Endothelial cell of umbilical vein (primary cell): ENCODE measurements at regions of chr9 and their contacts with region 1.

Region 1: DNA sequence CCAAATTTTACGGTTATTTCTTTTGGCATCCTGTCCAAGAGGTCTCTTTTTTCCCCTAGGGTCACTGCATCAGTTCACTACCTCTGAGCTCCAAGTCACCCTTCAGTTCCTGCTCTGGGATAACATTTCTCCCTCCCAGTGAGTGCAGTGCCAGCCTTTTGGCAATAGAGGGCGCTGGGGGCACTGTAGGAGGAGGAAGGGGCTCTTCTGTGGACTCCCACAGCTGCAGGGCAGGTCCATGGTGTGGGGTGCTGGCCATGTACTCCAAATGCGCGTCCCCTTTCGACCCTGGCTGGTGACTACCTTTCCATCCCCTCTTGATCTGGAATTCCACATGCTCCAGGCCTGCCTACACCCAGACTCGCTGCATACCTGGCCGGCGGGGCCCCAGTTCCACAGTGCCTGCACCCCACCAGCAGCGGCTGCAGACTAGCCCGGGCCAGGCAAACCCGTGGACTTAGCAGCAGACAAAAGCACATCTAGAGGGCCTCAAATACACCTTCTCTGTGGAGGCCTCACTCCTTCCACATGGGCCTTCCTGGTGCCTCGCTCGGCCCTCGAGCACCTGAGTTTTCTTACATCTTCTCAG is 20.4 kb upstream of the NINJ1 start:
- DNase-seq: peak; percentile 38
- H3K4me3 ChIP-seq: no peak overlapping the region
- H3K27ac ChIP-seq: no peak overlapping the region
- H3K4me1 ChIP-seq: no peaks in the 10 kb centered on the region
- H3K27me3 ChIP-seq: no peaks in the 10 kb centered on the region
- CTCF ChIP-seq: peak; percentile 60 to 67
- POLR2A ChIP-seq: no peak

Region 2: DNA sequence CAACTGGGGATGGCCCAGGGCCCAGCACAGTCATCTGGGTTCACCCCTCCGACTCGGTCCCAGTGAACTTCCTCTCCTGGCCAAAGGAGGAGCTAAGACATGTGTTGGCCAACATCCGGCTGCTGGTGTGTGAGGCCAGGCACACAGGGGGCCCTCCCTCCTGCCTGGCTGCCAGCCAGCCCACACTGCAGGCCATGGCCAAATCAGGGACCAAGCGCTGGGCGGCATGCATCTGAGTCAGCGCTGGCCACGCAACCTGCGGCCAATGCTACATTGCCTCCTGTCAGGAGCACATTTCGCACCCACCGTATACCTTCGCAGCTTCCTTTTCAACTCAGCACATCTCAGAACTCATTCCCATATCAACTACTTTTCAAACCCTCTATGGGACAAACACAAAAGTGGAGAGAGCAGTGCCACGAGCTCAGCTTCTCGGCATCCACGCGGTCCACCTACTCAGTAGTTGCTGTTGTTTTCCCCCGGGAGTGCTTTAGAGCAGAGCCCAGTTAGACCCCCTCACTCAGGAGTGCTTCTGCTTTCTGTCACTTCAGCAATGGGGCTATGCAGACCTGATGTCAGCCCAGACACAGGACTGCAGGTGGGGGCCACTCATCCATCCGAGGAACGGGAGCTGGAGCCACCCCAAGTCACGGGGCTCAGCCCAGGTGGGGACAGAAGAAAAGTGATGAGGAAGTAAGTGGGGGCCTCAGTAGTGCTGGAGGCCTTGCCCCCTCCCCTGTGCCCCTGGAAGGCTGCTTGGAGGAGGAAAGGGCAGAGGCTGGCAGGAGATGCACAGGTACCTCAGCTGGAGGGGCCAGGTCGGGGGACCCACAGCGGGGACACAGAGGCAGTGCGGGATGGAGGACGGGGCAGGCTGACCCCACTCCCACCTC is 34.2 kb before region 1 on chr9:
- CTCF ChIA-PET with region 1: interaction called, 12 read pairs
- POLR2A ChIA-PET with region 1: no interaction called
- dilution Hi-C with region 1: no loop called
- intact Hi-C with region 1: no loop called
- DNase-seq: peak; percentile 80
- H3K4me3 ChIP-seq: no peak overlapping the region
- H3K27ac ChIP-seq: no peak overlapping the region
- H3K4me1 ChIP-seq: peaks cover 10% of the 10 kb centered on the region
- H3K27me3 ChIP-seq: no peaks in the 10 kb centered on the region
- CTCF ChIP-seq: peak in 1 of 2 donors; percentile 41
- POLR2A ChIP-seq: peak; percentile 30

Region 3: DNA sequence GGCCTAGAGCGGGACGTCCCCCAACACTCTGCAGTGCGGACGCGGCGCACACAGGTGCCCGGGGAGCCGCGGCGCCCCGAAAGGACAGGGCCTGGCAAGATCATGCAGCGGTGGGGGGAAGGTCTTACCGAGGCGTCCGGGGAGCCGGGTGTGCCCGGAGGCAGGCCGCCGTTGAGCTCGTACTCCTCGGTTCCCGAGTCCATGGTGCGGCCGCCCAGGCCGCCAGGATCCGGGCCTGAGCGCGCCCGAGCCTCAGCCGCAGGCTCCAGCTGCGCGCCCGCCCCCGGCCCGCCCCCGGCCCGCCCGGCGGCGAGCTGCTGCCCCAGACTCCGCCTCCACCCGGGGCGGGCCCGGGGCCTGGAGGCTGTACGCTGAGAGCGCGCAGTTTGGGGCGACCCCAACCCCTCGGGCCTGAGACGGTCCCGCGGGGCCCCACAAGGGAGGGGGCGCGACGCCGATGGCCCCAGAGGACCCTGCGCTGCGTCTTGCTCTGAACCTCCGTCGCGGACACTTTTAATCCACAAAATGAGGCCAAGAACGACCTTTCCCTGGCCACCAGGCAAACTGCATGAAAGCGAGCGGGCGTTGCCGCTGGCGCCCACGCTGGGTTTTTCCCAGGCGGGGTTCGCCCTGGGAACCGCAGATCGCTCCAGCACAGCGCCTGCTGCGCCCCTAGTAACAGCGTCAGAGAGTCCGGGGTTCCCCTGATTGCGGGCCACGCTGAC is 20.2 kb before region 1 on chr9 and contains the start of gene NINJ1:
- CTCF ChIA-PET with region 1: interaction called, 10 read pairs
- POLR2A ChIA-PET with region 1: no interaction called
- dilution Hi-C with region 1: no loop called
- intact Hi-C with region 1: no loop called
- DNase-seq: peak; percentile 83
- H3K4me3 ChIP-seq: peak within 1 kb of the TSS; percentile 54 to 63 (median 58)
- H3K27ac ChIP-seq: peak within 1 kb of the TSS; percentile 75
- H3K4me1 ChIP-seq: peaks cover 49% of the 10 kb centered on the region
- H3K27me3 ChIP-seq: no peaks in the 10 kb centered on the region
- CTCF ChIP-seq: peak in 1 of 2 donors; percentile 5
- POLR2A ChIP-seq: peak; percentile 77
- total RNA-seq, gene NINJ1: 31.5 and 42.2 TPM in 2 replicates

Region 4: DNA sequence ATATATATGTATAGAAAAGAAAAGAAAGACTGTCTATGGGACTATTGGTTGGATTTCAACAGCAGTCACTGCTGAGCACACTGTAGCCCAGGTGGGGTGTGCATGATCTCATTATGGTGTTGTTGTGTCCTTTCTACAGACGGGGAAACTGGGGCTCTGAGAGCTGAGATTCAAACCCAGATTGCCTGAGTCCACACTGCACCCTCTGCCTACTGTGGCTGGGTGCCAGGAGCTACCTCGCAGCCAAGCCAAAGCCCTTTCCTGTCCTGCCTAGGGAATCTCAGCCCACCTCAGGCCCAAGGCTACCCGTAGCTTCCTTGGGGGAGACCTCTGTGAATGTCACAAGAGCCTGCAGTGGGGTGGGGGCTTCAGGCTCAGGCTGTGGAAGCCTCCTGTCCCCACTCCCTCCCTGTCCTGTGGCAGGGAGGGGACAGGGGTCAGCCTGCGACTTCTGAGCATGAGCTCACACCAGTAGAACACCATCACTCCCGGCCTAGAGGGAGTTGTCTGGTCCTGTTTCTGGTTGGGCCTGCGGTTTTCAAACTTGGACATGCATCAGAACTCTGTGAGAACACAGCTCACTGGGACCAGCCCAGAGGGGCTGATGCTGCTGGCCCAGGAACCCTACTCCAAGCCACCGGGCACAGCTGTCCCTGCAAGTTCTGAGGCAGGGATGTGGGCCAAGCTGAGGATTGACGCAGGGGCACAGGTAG is 12.5 kb before region 1 on chr9:
- CTCF ChIA-PET with region 1: interaction called, 20 read pairs
- POLR2A ChIA-PET with region 1: no interaction called
- dilution Hi-C with region 1: no loop called
- intact Hi-C with region 1: no loop called
- DNase-seq: no peak
- H3K4me3 ChIP-seq: no peak overlapping the region
- H3K27ac ChIP-seq: no peak overlapping the region
- H3K4me1 ChIP-seq: peaks cover 3% of the 10 kb centered on the region
- H3K27me3 ChIP-seq: no peaks in the 10 kb centered on the region
- CTCF ChIP-seq: no peak
- POLR2A ChIP-seq: no peak

Region 5: GRCh38 chr9:93193148-93193755 is 38.8 kb after region 1 on chr9:
- CTCF ChIA-PET with region 1: no interaction called
- POLR2A ChIA-PET with region 1: no interaction called
- dilution Hi-C with region 1: no loop called
- intact Hi-C with region 1: no loop called
- DNase-seq: no peak
- H3K4me3 ChIP-seq: no peak overlapping the region
- H3K27ac ChIP-seq: no peak overlapping the region
- H3K4me1 ChIP-seq: no peaks in the 10 kb centered on the region
- H3K27me3 ChIP-seq: no peaks in the 10 kb centered on the region
- CTCF ChIP-seq: no peak
- POLR2A ChIP-seq: no peak

Region 6: GRCh38 chr9:93302551-93303257 is 148.3 kb after region 1 on chr9:
- CTCF ChIA-PET with region 1: interaction called, 32 read pairs
- POLR2A ChIA-PET with region 1: no interaction called
- dilution Hi-C with region 1: no loop called
- intact Hi-C with region 1: no loop called
- DNase-seq: peak; percentile 44
- H3K4me3 ChIP-seq: no peak overlapping the region
- H3K27ac ChIP-seq: no peak overlapping the region
- H3K4me1 ChIP-seq: no peaks in the 10 kb centered on the region
- H3K27me3 ChIP-seq: no peaks in the 10 kb centered on the region
- CTCF ChIP-seq: peak; percentile 53 to 82
- POLR2A ChIP-seq: no peak